ENCODE measurements at regions of chr1 and their contacts with region 1.

Region 1: DNA sequence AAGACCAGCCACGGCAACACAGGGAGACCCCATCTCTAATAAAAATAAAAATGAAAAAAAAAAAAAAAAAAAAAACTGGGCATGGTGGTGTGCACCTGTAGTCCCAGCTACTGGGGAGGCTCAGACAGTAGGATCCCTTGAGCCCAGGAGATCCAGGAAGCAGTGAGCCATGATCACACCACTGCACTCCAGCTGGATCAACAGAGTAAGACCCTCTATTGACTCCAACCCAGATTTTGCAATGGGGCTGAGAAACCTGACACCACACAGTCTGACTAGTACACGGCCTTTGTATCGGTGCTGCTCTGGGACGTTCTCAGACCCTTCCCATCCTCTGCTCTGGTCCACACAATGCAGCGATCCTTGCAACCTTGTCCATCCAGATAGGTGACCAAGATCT is 31.8 kb downstream of the SPATA21 start:
- DNase-seq: no peak
- H3K4me3 ChIP-seq: no peak overlapping the region
- CTCF ChIP-seq: no peak
- POLR2A ChIP-seq: no peak

Region 2: DNA sequence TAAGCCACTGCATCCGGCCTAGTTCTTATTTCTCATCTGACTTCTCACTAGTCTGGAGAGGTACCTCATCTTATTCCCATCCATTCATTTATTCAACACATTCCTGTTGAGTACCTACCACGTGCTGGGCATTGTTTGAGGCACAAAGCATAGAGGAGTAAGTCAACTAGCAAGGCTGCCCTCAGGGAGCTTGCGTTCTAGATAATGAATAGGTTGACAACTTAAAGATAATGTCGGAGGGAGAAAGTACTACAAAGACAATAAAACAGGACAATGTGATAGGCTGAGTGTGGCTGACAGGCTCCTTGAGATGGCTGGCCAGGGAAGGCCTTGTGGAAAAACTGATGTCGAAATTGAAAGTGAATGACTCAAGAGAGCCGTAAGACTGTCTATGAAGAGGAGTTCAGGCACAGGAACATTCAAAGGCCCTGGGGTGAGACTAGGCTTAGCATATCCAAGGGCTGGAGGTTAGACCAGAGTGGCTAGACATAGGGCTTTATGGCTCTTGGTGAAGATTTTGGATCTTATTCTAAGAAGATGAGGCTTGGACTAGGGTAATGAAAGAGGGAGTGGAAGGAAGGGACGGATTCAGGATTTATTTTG is 13.5 kb after region 1 on chr1:
- intact Hi-C with region 1: loop called (anchors 2 kb)
- DNase-seq: no peak
- H3K4me3 ChIP-seq: no peak overlapping the region
- CTCF ChIP-seq: no peak
- POLR2A ChIP-seq: no peak